Posterior cingulate gyrus (tissue), 11 donors: ENCODE measurements at regions of chr11 and their contacts with region 1.

Region 1: DNA sequence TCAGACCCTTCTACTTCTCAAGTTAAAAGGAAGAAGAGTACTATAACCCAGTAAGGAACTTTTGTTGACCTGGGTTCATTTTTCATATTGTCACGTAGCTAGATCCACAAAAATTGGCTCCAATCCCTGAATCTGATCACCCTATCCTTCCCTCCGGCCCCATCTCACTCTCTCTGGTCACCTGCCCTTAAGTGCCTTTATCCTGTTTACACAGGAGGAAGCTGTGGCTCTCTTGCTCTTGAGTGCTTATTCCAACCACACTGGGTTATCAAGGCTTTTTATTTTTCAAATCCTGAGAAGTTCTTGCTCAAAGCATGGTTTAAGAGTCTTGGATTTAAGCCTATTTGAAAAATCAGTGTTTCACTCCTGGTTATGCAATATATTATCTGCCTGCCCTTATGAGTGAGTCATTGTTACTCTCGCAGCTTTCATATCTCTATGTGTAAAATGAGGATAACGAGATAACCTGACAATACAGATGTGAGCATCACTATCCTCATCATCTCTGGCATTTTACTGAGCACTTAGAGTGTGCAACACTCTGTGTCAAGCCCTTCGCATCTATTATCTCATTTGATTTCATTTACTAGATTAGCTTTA is 293.9 kb downstream of the GUCY1A2 start:
- DNase-seq: no peak

Region 2: DNA sequence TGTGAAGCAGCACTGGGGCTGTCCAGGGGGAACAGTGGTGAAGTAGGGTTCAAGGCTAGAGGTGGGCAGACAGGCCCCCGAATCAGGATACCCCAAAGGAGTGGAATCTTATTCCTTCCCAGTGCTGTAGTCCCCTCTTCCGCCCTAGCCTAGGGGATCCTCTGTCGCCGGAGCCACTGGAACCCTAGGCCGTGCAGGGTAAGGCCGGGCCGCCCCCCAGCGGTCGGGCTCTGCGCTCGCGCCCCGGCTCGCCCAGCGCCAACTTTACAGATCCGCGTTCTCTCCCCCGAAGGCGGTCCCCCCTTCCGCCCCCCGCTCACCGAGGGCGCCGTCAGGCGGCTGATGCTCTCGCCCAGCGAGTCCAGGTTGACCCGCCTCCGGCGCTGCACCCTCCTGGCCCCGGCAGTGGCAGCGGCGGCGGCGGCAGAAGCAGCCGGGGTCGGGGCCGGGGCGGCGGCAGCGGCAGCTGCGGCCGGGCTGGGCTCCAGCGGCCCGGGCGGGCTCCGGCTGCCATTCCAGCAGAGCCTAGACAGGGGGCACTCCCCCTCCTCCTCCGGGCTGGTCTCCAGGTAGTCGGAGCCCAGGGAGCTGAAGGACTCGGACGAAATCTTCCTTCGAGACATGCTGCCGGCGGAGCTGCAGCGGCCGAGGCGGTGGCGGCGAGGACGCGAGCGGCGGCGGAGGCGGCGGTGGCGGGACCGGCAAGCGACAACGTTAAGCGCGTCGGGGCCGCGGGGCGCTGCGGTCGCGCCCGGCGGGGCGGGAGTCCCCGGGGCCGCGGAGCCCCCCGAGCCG is 293.2 kb after region 1 on chr11:
- intact Hi-C with region 1: loop called (anchors 5 kb)
- DNase-seq: peak; percentile 56 to 94 (median 64)

Region 3: DNA sequence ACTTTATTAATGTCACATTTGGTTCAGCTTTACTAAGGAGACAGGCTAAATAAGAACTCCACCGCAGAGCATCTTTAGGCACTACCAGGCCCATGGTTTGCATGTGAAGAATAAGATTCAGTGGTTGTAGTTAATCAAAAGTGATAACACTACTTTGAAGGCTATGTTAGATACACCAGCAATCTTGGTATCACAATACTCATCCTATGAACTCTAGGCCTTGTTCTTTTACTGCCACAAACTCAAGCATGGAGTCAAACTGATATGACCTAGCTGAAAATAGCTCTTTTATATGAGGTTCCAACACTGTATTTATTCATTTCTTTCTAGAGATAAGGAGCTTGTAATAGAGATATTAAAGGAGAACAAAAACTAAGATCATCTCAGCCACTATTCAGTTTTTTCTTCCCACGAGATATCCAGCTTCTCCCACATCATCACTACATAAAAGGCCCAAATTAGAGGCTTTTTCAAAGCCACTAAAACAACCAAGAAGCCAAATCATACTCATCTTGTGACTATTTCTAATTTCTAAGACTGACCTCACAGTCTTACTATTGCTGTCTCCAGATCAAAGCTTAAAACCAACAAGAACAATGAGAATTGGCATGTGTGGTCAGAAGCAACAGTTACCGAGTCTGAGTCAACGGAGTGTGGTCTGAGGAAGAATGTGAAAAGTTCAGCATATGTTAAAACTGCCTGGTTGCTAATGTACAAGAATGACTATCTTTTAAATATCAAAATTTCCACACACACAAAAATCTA is 319.0 kb after region 1 on chr11:
- intact Hi-C with region 1: loop called (anchors 5 kb)
- DNase-seq: no peak